Transverse colon (tissue), 4 donors: ENCODE measurements at regions of chr3 and their contacts with region 1.

Region 1: GRCh38 chr3:153038779-153039178 is 123.2 kb upstream of the RAP2B start:
- DNase-seq: peak; percentile 23
- H3K4me3 ChIP-seq: no peak overlapping the region
- H3K27ac ChIP-seq: no peak overlapping the region
- H3K4me1 ChIP-seq: peaks cover 0 to 18% (median 2%) of the 10 kb centered on the region in 4 donors
- H3K27me3 ChIP-seq: no peaks in the 10 kb centered on the region
- CTCF ChIP-seq: no peak
- EP300 ChIP-seq: no peak
- POLR2A ChIP-seq: no peak

Region 2: GRCh38 chr3:152087153-152087552 is 951.6 kb before region 1 on chr3:
- in situ Hi-C with region 1: no loop called
- intact Hi-C with region 1: no loop called
- DNase-seq: no peak
- H3K4me3 ChIP-seq: no peak overlapping the region
- H3K27ac ChIP-seq: peak overlapping the region in 1 of 4 donors; percentile 13
- H3K4me1 ChIP-seq: no peaks in the 10 kb centered on the region
- H3K27me3 ChIP-seq: no peaks in the 10 kb centered on the region
- CTCF ChIP-seq: no peak
- EP300 ChIP-seq: no peak
- POLR2A ChIP-seq: no peak

Region 3: GRCh38 chr3:153595186-153595815 is 556.5 kb after region 1 on chr3:
- in situ Hi-C with region 1: loop called (anchors 10 to 25 kb)
- intact Hi-C with region 1: no loop called
- DNase-seq: no peak
- H3K4me3 ChIP-seq: no peak overlapping the region
- H3K27ac ChIP-seq: no peak overlapping the region
- H3K4me1 ChIP-seq: peaks cover 0 to 4% (median 0%) of the 10 kb centered on the region in 4 donors
- H3K27me3 ChIP-seq: no peaks in the 10 kb centered on the region
- CTCF ChIP-seq: peak; percentile 44 to 57 (median 54)
- EP300 ChIP-seq: no peak
- POLR2A ChIP-seq: no peak